Ascending aorta (tissue), 2 donors: ENCODE measurements at regions of chr6 and their contacts with region 1.

Region 1: GRCh38 chr6:75208298-75209183 is 2.7 kb upstream of the COL12A1 start:
- DNase-seq: peak; percentile 35 to 94
- H3K4me3 ChIP-seq: peak overlapping the region; percentile 41 to 56
- H3K27ac ChIP-seq: peak overlapping the region; percentile 64 to 68
- H3K4me1 ChIP-seq: peaks cover 7 to 19% of the 10 kb centered on the region in 2 donors
- H3K27me3 ChIP-seq: no peaks in the 10 kb centered on the region
- CTCF ChIP-seq: peak; percentile 78 to 87 (median 84)

Region 2: DNA sequence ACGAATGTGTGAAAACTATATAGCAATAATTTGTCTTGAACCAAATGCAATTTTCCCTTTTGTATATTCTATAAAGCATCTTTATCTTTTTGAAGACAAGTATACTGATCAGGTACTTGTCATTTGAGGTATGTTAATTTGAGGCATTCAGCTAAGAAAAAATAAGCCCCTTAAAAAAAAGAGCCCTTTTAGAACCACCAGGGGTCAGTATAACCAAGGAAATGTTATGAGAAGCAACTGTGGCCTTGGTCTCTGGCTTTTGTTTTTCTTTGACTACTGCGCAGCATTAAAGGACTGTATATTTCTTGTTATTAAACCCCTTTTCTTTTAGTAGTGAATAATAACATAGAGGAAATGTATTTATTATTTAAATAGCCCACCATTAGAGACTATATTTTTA is 1469.4 kb before region 1 on chr6:
- intact Hi-C with region 1: loop called (anchors 2 kb)
- DNase-seq: no peak
- H3K4me3 ChIP-seq: no peak overlapping the region
- H3K27ac ChIP-seq: no peak overlapping the region
- H3K4me1 ChIP-seq: no peaks in the 10 kb centered on the region
- H3K27me3 ChIP-seq: no peaks in the 10 kb centered on the region
- CTCF ChIP-seq: peak; percentile 69 to 82 (median 77)

Region 3: DNA sequence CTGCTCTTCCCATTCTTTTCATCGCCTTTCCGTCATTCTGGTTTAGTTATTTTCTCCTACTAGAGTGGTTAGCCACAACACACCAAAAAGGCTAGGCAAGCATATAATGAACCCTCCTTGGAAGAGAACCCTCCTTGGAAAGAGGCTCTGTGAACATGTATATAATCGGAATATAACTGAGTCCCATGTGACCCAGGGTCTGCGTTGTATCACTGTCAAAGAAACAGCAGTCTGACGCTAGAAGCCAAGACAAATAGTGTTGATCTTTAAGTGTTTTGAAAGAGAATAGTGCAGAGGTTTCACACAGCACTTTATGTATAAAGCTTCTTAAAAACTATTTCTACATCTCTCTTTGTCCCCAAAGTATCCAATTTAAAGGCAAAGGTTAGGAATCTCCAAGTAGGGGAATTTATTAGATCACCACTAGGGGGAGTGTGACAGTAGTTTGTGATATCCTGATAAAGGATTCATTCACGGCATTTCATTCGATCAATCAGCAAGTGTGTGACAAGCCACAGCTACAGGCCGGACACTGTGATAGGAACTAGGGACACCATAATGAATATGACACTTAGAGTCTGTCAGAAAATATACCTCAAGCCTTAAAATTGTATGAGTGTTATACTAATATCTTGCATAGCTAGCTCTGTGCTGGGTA is 1117.3 kb before region 1 on chr6:
- intact Hi-C with region 1: loop called (anchors 5 kb)
- DNase-seq: no peak
- H3K4me3 ChIP-seq: no peak overlapping the region
- H3K27ac ChIP-seq: no peak overlapping the region
- H3K4me1 ChIP-seq: no peaks in the 10 kb centered on the region
- H3K27me3 ChIP-seq: no peaks in the 10 kb centered on the region
- CTCF ChIP-seq: peak in 2 of 3 experiments; percentile 29 to 61

Region 4: GRCh38 chr6:74606581-74607071 is 601.9 kb before region 1 on chr6:
- intact Hi-C with region 1: loop called (anchors 5 kb)
- DNase-seq: peak in 1 of 2 donors; percentile 71
- H3K4me3 ChIP-seq: no peak overlapping the region
- H3K27ac ChIP-seq: peak overlapping the region; percentile 53 to 58
- H3K4me1 ChIP-seq: peaks cover 0 to 28% of the 10 kb centered on the region in 2 donors
- H3K27me3 ChIP-seq: no peaks in the 10 kb centered on the region
- CTCF ChIP-seq: no peak

Region 5: GRCh38 chr6:74931558-74931957 is 277.0 kb before region 1 on chr6:
- intact Hi-C with region 1: loop called (anchors 5 kb)
- DNase-seq: no peak
- H3K4me3 ChIP-seq: no peak overlapping the region
- H3K27ac ChIP-seq: peak overlapping the region in 1 of 2 donors; percentile 62
- H3K4me1 ChIP-seq: peaks cover 0 to 17% of the 10 kb centered on the region in 2 donors
- H3K27me3 ChIP-seq: no peaks in the 10 kb centered on the region
- CTCF ChIP-seq: no peak

Region 6: DNA sequence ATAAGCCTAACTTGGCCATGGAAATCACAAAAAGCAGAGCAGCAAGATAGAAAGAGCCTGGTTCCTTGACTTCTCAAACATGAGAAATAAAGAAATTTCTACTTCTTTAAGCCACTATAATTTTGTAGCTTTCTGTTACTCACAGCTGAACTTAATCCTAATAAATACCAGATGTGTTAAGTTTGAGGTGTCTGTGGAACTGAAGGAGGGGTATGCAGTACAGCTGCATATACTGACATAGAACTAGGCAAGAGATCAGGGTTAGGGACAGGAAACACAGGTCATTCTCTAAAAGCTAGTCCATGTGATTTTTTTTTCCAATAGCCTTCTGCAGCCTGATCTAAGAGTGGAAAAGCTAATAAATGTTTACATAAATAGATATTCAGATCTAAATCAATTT is 126.6 kb before region 1 on chr6:
- intact Hi-C with region 1: no loop called
- DNase-seq: no peak
- H3K4me3 ChIP-seq: no peak overlapping the region
- H3K27ac ChIP-seq: no peak overlapping the region
- H3K4me1 ChIP-seq: no peaks in the 10 kb centered on the region
- H3K27me3 ChIP-seq: no peaks in the 10 kb centered on the region
- CTCF ChIP-seq: no peak